Common myeloid progenitor, CD34-positive (primary cell): ENCODE measurements at regions of chr17 and their contacts with region 1.

Region 1: DNA sequence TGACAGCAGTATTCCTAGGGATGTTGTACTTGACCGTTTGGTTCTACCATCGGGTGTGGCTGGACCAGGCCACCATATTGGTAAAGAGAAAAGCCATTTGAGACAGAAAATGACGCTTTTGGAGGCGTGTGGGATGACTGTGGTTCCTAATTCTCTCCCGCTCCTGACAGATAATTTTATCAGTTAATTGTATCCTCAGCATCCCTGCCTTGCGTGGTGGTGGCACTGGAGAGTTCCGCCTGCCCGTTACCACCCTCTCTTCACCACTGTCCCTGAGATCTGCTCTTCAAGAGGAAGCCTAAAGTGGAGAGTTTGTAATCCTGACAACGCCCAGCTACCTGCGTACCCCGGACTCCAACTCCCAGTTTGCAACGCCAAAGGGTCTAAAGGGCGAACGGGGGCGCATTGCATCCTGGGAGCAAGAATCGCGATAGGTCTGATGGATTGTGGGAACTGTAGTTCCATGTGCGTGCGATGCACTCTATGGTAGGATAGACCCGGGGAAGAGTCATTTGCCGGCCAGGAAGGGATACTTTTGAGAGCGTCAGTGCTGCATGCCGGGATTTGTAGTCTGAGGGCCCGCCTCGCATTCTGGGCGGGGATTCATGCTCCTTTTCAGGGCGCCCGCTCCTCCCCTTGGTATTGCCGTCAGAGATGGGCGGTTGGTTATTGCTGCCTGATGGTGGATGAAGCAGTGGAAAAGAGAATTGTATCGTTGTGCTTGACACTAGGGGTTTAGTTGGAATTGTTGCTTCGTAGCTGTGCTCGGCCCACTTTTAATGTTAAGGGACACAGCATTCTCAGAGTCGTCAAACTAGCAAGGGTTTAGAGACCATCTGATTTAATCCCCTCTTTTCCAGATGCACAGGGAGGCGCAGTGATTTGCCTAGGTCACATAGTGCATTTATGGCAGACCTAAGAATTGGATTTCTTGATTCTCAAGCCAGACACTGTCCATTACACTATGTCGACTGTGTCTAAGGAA is 965 bp upstream of the PHF12 start:
- DNase-seq: peak; percentile 99 to 100 (median 100)
- H3K4me3 ChIP-seq: peak overlapping the region; percentile 61 to 95 (median 84)
- H3K27ac ChIP-seq: peak overlapping the region; percentile 92 to 96
- H3K4me1 ChIP-seq: peaks cover 13 to 42% (median 30%) of the 10 kb centered on the region in 4 experiments
- H3K27me3 ChIP-seq: no peaks in the 10 kb centered on the region

Region 2: GRCh38 chr17:28710861-28711722 is 241.2 kb before region 1 on chr17:
- CTCF ChIA-PET with region 1: no interaction called
- POLR2A ChIA-PET with region 1: no interaction called
- DNase-seq: peak; percentile 77 to 90 (median 87)
- H3K4me3 ChIP-seq: peak overlapping the region; percentile 51 to 83 (median 72)
- H3K27ac ChIP-seq: peak overlapping the region in 1 of 2 experiments; percentile 85
- H3K4me1 ChIP-seq: peaks cover 0 to 29% (median 23%) of the 10 kb centered on the region in 4 experiments
- H3K27me3 ChIP-seq: no peaks in the 10 kb centered on the region

Region 3: DNA sequence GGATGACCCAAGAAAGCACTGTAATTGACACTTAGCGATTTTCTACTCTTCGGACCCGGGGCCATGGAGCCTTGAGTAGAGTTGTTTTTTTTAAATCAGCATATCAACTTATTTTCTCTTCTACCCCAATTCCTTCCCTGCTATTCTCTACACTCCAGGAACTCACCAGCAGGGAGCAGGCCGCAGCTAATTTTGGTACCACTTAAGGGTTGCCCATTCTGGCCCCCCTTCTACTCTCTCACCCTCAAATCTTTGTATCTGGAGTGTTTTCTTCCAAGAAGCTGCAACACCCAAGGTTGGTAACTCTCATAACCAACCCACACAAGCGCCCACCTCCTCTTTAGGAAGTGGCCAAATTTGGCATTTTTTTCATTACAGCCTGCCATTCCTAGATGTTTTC is 103.0 kb before region 1 on chr17:
- CTCF ChIA-PET with region 1: interaction called, 12 read pairs
- POLR2A ChIA-PET with region 1: no interaction called
- DNase-seq: peak; percentile 75 to 86 (median 85)
- H3K4me3 ChIP-seq: no peak overlapping the region
- H3K27ac ChIP-seq: no peak overlapping the region
- H3K4me1 ChIP-seq: peaks cover 0 to 3% (median 3%) of the 10 kb centered on the region in 4 experiments
- H3K27me3 ChIP-seq: no peaks in the 10 kb centered on the region

Region 4: DNA sequence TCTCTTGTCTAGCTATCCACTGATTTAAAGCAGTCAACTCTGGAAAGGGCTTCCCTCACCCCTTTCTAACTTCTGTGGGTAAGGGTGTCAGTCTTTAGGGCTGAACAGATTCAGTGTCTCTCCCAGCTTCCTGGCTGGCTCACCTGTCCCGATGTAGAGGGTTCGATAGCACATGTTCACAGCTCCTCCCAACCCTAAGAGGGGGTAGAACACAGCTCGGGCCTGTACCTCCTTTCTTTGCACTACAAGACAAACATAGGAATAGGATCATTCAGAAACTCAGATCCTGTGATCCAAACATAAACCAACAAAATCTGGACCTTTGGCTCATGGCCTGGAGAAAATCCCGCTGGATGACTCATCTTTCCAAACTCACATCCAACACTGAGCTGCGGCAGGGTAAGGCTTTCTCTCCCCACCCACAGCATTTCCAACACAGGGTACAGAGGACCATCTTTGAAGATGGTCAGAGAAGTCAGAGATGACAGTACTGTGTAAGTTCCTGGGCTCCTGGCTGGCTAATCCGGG is 43.6 kb before region 1 on chr17:
- CTCF ChIA-PET with region 1: interaction called, 12 read pairs
- POLR2A ChIA-PET with region 1: no interaction called
- DNase-seq: no peak
- H3K4me3 ChIP-seq: no peak overlapping the region
- H3K27ac ChIP-seq: peak overlapping the region in 1 of 2 experiments; percentile 18
- H3K4me1 ChIP-seq: no peaks in the 10 kb centered on the region
- H3K27me3 ChIP-seq: no peaks in the 10 kb centered on the region

Region 5: GRCh38 chr17:28925912-28926365 is 26.3 kb before region 1 on chr17:
- CTCF ChIA-PET with region 1: interaction called, 128 read pairs
- POLR2A ChIA-PET with region 1: interaction called, 23 read pairs
- DNase-seq: peak; percentile 95 to 98 (median 96)
- H3K4me3 ChIP-seq: peak overlapping the region in 6 of 7 experiments; percentile 25 to 75 (median 45)
- H3K27ac ChIP-seq: peak overlapping the region; percentile 95 to 96
- H3K4me1 ChIP-seq: peaks cover 26 to 47% (median 34%) of the 10 kb centered on the region in 4 experiments
- H3K27me3 ChIP-seq: no peaks in the 10 kb centered on the region

Region 6: DNA sequence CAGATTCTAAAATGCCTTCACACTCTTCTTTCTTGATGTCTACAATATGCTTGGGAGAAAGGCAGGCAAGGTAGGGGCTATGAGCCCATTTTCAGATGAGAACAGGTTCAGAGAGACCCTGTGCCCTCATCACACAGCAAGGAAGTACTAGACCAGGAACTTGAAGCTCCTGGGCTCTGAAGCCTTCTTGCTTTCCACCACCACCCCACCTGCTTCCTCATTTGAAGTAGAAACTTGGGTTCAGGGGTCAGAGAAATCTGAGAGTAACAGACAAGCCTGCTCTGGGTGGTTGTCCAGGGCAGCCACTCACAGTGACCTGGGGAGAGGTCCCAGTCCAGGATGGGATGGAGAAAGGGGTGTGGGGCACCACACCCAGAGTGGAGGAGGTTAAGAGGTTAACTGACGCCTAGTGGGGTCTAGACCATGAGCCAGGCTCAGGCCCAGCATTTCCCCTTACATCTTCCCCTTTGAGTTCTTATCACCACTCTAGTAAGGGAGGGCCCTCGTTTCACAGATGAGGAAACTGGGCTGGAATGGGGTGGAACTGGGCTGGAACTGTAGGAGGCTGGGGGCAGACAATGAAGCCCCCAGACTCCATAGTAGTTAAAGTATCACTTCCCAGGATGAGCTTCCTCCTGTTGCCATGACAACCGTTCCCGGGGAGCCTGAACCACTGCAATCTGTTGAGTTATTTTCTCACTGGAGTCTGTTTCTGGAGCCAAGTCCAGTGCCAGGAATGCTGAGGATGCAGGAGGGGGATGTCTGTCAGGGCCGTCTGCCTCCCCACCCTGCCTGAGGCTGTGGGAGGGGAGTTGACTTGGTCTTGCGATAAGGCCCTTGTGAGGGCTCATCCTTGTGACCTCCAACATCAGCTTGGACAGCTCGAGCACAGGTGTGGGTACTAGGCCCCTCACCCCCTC is 15.2 kb after region 1 on chr17:
- CTCF ChIA-PET with region 1: interaction called, 19 read pairs
- POLR2A ChIA-PET with region 1: interaction called, 3 read pairs
- DNase-seq: peak in 2 of 3 donors; percentile 55 to 64
- H3K4me3 ChIP-seq: no peak overlapping the region
- H3K27ac ChIP-seq: no peak overlapping the region
- H3K4me1 ChIP-seq: peaks cover 0 to 10% (median 1%) of the 10 kb centered on the region in 4 experiments
- H3K27me3 ChIP-seq: peaks cover 0 to 9% (median 0%) of the 10 kb centered on the region in 5 experiments

Region 7: DNA sequence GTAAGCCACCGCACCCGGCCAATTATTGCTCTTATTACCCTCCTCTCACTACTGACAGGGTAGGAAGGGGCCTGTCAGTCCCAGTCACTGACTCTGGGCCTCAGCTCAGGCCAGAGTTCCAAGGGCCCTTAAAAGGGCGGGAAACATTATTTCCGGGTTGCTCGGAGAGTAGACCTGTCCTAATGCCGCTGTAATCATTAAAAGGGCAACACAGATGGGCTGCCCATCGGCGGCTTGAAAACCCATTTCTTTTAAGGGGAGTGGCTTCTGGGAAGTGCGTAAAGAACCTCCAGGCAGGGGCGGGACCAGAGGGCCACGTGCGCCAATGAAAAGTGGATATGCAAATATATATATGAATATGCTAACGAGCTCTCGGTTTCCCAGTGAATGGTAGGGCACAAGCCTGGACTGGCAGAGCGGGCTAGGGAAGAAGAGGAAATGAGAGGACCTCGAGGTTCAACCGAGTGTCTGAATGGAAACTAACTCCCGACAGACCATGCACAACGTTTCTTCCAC is 117.3 kb after region 1 on chr17:
- CTCF ChIA-PET with region 1: no interaction called
- POLR2A ChIA-PET with region 1: no interaction called
- DNase-seq: no peak
- H3K4me3 ChIP-seq: no peak overlapping the region
- H3K27ac ChIP-seq: no peak overlapping the region
- H3K4me1 ChIP-seq: no peaks in the 10 kb centered on the region
- H3K27me3 ChIP-seq: no peaks in the 10 kb centered on the region